ENCODE measurements at regions of chr10 and their contacts with region 1.

Region 1: DNA sequence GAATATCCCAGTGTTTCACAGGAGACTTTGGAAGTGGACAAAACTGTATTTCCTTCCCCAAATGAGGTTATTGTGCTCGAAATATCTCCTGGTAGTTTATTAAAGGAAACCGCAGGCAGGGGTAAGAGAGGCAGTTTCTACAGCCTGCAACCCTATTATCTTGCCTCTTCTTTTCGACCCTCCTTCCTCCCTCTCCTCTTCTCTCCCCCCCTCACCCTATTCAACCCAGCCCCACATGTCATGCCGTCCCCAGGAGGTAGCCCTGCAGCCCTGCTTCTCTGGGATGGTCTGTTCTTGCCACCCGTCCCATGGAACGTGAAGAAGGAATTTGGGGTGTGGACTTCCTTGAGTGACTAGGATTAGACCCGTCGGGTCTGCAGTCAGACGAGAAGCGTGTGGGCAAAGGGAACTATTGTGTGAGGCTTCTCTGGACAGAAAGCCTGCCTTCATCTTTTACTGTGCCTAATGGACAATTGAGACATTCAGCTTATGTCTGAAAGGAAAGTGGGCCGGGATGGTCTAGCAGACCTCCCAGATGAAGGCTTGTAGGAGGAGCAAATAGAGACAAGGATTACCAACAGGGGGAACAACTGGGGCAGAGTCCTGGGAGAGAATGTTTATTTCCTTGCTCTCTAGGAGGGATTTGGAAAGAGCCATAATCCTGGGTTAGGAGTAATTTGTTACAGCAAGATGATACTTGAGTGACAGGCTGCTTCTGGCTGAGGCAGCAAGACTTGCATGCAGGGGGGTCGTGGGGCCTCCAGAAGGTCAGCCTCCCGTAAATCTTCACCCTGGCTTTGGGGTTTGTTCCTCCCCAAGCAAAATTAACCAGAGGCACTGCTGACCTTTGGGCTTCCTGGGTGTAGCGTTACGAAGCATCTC is 77.8 kb downstream of the TCF7L2 start:
- DNase-seq: no peak
- H3K4me3 ChIP-seq: no peak overlapping the region
- H3K27ac ChIP-seq: peak overlapping the region in 1 of 3 donors; percentile 8
- H3K4me1 ChIP-seq: peaks cover 25 to 41% of the 10 kb centered on the region in 2 donors
- H3K27me3 ChIP-seq: no peaks in the 10 kb centered on the region
- CTCF ChIP-seq: no peak
- POLR2A ChIP-seq: no peak

Region 2: DNA sequence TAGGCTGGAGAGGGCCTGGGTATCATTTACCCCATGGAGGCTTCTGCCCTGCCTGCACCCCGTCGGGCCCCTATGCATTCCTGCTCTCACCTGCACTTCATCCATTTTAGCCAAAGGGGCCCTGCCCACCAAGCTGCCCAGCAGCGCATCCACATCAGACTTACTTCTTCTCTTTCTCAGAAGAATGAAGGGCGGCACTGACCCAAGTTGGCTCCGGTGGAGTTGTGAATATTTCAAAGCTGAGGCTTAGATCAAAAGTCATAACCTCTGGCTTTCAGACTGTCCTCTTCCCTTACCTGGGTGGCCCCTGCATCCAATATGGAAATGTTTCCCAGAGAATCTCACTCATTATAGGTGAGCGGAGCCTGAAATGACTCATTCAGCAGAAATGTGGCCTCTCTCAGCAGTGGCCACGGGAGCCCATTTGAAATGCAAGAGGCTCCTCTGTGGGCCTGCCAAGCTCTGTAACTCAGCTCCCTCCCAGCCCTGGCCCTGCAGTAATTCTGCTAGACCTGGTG is 195.4 kb before region 1 on chr10:
- intact Hi-C with region 1: no loop called
- DNase-seq: no peak
- H3K4me3 ChIP-seq: no peak overlapping the region
- H3K27ac ChIP-seq: no peak overlapping the region
- H3K4me1 ChIP-seq: peaks cover 9 to 17% of the 10 kb centered on the region in 2 donors
- H3K27me3 ChIP-seq: no peaks in the 10 kb centered on the region
- CTCF ChIP-seq: no peak
- POLR2A ChIP-seq: no peak

Region 3: DNA sequence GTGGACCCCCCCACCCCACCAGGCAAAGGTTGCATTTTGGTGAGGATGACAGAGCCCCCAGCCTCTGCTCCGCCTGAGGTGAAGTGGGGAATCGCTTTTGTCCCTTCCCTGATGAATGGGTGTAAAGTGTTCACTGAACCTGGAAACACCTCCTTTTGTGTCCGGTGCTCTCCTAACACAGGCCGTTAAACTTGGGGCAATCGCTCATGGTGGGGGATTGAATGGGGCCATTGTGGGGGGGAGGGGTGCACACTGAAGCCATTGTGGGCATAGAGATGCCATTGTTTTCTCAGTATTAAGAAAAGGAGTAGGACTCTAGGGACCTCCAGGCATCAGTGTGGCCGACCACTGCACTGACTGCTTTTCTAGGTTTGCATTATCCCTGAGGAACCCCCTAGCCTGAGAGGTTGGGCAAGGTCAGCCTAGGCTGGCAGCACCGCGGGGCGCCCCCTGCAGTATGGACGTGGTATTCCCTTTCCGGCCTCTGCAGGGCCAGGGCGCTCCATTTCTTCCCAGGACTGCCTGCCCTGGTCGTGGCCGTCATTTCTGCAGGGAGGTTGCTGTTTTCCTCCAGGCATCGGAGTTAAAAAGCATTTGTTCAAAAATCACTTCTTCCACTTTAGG is 80.5 kb after region 1 on chr10:
- intact Hi-C with region 1: loop called (anchors 10 kb)
- DNase-seq: peak in 1 of 2 donors; percentile 18
- H3K4me3 ChIP-seq: no peak overlapping the region
- H3K27ac ChIP-seq: no peak overlapping the region
- H3K4me1 ChIP-seq: peaks cover 15 to 20% of the 10 kb centered on the region in 2 donors
- H3K27me3 ChIP-seq: no peaks in the 10 kb centered on the region
- CTCF ChIP-seq: peak in 3 of 6 experiments; percentile 24 to 46 (median 24)
- POLR2A ChIP-seq: no peak

Region 4: GRCh38 chr10:113498997-113499396 is 471.2 kb after region 1 on chr10:
- intact Hi-C with region 1: no loop called
- DNase-seq: peak; percentile 68 to 74
- H3K4me3 ChIP-seq: no peak overlapping the region
- H3K27ac ChIP-seq: peak overlapping the region in 2 of 3 donors; percentile 24 to 67
- H3K4me1 ChIP-seq: peaks cover 58 to 62% of the 10 kb centered on the region in 2 donors
- H3K27me3 ChIP-seq: no peaks in the 10 kb centered on the region
- CTCF ChIP-seq: no peak
- POLR2A ChIP-seq: no peak

Measured in thyroid gland (tissue), 4 donors.